Natural killer cell (primary cell): ENCODE measurements at regions of chrX and their contacts with region 1.

Region 1: DNA sequence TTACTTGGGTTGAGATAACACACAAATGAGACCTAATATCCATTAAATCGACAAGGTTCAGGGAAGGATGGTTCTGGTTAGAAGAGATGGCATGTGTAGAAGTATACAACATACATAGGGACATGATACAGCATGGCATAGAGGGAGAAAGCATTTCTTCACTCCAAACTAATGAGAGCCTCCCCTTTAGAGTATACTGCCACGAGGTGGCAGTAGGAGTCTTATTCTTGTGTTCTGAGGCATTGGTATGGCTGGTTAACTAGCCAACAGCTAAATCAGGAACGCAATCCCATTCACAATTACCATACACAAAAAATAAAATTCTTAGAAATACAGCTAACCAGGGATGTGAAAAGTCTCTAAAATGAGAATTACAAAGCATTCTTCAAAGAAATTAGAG is 29.1 kb upstream of the TRO start:
- DNase-seq: peak in 1 of 2 donors; percentile 69
- ATAC-seq: peak in 2 of 3 donors; percentile 44 to 66
- H3K4me3 ChIP-seq: no peak overlapping the region
- H3K4me3 Mint-ChIP-seq: no peak overlapping the region
- H3K27ac ChIP-seq: no peak overlapping the region
- H3K27ac Mint-ChIP-seq: no peak overlapping the region
- H3K4me1 ChIP-seq: no peaks in the 10 kb centered on the region
- H3K4me1 Mint-ChIP-seq: no peaks in the 10 kb centered on the region
- H3K27me3 ChIP-seq: no peaks in the 10 kb centered on the region
- H3K27me3 Mint-ChIP-seq: peaks cover 23 to 52% of the 10 kb centered on the region in 2 donors
- CTCF ChIP-seq: peak; percentile 49

Region 2: GRCh38 chrX:54076903-54077302 is 814.7 kb before region 1 on chrX:
- intact Hi-C with region 1: no loop called
- DNase-seq: no peak
- ATAC-seq: no peak
- H3K4me3 ChIP-seq: no peak overlapping the region
- H3K4me3 Mint-ChIP-seq: no peak overlapping the region
- H3K27ac ChIP-seq: no peak overlapping the region
- H3K27ac Mint-ChIP-seq: no peak overlapping the region
- H3K4me1 ChIP-seq: no peaks in the 10 kb centered on the region
- H3K4me1 Mint-ChIP-seq: no peaks in the 10 kb centered on the region
- H3K27me3 ChIP-seq: no peaks in the 10 kb centered on the region
- H3K27me3 Mint-ChIP-seq: no peaks in the 10 kb centered on the region
- CTCF ChIP-seq: no peak

Region 3: GRCh38 chrX:54909941-54910340 is 18.4 kb after region 1 on chrX:
- intact Hi-C with region 1: no loop called
- DNase-seq: no peak
- ATAC-seq: no peak
- H3K4me3 ChIP-seq: no peak overlapping the region
- H3K4me3 Mint-ChIP-seq: no peak overlapping the region
- H3K27ac ChIP-seq: no peak overlapping the region
- H3K27ac Mint-ChIP-seq: no peak overlapping the region
- H3K4me1 ChIP-seq: no peaks in the 10 kb centered on the region
- H3K4me1 Mint-ChIP-seq: no peaks in the 10 kb centered on the region
- H3K27me3 ChIP-seq: no peaks in the 10 kb centered on the region
- H3K27me3 Mint-ChIP-seq: peaks cover 0 to 9% of the 10 kb centered on the region in 2 donors
- CTCF ChIP-seq: no peak

Region 4: DNA sequence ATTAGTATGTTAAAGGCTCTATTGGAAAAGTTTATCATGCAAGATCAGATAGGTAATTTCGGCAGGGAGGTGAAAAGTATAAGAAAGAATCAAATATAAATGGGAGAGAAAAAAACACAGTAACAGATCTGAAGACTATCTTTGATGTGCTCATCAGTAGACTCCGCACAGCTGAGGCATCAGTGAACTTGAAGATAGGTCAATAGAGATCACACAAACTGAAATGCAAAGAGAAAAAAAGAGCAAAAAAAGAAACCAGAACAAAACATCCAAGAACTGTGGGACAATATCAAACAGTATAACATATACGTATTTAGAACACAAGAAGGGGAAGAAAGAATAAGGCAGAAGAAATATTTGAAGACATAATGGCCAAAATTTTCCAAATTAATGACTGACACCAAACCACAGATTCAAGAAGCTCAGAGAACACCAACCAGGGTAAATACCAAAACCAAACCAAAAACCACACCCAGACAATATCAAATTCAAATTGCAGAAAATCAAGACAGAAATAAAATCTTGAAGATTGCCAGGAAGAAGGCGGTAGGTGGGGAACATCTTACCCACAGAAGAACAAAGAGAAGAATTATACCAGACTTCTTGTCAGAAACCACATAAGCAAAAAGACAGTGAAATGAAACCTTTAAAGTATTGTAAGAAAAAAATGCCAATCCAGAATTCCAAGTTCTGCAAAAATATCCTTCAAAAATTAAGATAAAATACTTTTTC is 73.4 kb after region 1 on chrX:
- intact Hi-C with region 1: no loop called
- DNase-seq: peak in 1 of 2 donors; percentile 40
- ATAC-seq: no peak
- H3K4me3 ChIP-seq: no peak overlapping the region
- H3K4me3 Mint-ChIP-seq: no peak overlapping the region
- H3K27ac ChIP-seq: no peak overlapping the region
- H3K27ac Mint-ChIP-seq: no peak overlapping the region
- H3K4me1 ChIP-seq: no peaks in the 10 kb centered on the region
- H3K4me1 Mint-ChIP-seq: peaks cover 0 to 7% of the 10 kb centered on the region in 2 donors
- H3K27me3 ChIP-seq: no peaks in the 10 kb centered on the region
- H3K27me3 Mint-ChIP-seq: peaks cover 5 to 37% of the 10 kb centered on the region in 2 donors
- CTCF ChIP-seq: no peak

Region 5: DNA sequence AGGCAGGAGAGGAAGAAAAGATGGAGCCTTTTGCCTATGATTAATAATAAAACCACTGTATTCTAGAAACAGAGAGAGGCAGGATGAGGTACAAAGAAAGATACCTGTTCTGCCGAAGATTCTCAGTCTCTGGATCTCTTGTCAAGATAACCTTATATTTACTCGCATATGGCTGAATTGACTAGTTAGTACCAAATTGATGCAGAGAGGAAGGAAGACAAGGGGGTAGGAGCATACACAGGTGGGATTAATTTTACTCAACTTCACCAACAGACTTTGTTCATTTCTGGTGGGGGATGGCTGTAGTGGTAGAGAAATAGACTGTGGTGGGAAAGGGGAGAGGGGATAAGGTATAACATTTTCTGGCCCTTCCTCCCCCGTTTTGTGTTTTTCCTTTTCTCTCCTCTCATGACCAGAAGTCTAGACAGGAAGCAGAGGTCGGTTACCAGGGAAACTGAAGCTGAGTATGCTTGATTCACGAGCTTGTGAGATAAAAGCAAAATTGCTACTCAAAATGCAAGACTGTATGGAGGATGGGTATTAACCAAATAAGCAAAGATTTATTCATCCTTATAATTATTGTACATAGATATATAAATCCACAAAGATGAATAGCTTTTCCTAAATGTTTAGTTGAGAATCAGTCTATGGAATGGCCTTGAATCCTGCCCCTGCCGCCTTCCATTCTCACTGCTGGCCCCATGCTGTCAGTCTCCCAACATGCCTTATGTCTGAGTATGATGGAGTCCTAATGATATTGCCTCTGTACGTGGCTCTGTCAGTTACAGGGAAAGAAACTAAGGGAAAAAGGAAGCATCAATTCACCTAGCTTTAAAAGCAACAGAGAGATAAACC is 165.5 kb after region 1 on chrX:
- intact Hi-C with region 1: loop called (anchors 1 kb)
- DNase-seq: peak in 1 of 2 donors; percentile 72
- ATAC-seq: peak; percentile 64 to 74 (median 70)
- H3K4me3 ChIP-seq: no peak overlapping the region
- H3K4me3 Mint-ChIP-seq: peak overlapping the region; percentile 72
- H3K27ac ChIP-seq: no peak overlapping the region
- H3K27ac Mint-ChIP-seq: peak overlapping the region; percentile 49 to 52
- H3K4me1 ChIP-seq: peaks cover 6% of the 10 kb centered on the region
- H3K4me1 Mint-ChIP-seq: peaks cover 10 to 15% of the 10 kb centered on the region in 2 donors
- H3K27me3 ChIP-seq: no peaks in the 10 kb centered on the region
- H3K27me3 Mint-ChIP-seq: peaks cover 7 to 52% of the 10 kb centered on the region in 2 donors
- CTCF ChIP-seq: no peak

Region 6: GRCh38 chrX:55210931-55211681 is 319.5 kb after region 1 on chrX:
- intact Hi-C with region 1: no loop called
- DNase-seq: no peak
- ATAC-seq: no peak
- H3K4me3 ChIP-seq: no peak overlapping the region
- H3K4me3 Mint-ChIP-seq: no peak overlapping the region
- H3K27ac ChIP-seq: no peak overlapping the region
- H3K27ac Mint-ChIP-seq: no peak overlapping the region
- H3K4me1 ChIP-seq: no peaks in the 10 kb centered on the region
- H3K4me1 Mint-ChIP-seq: no peaks in the 10 kb centered on the region
- H3K27me3 ChIP-seq: no peaks in the 10 kb centered on the region
- H3K27me3 Mint-ChIP-seq: peaks cover 2 to 12% of the 10 kb centered on the region in 2 donors
- CTCF ChIP-seq: no peak